WTC11 (cell line): ENCODE measurements at regions of chr5 and their contacts with region 1.

Region 1: GRCh38 chr5:141825791-141826560 is 52.2 kb downstream of the PCDH1 start:
- DNase-seq: no peak
- ATAC-seq: peak; percentile 69
- H3K4me3 Mint-ChIP-seq: no peak overlapping the region
- H3K27ac Mint-ChIP-seq: 0 out of 2 replicates have a peak overlapping the region, but pooled peaks have one; percentile 28
- H3K4me1 Mint-ChIP-seq: peaks cover 62% of the 10 kb centered on the region
- H3K27me3 Mint-ChIP-seq: no peaks in the 10 kb centered on the region
- CTCF ChIP-seq: peak; percentile 37

Region 2: DNA sequence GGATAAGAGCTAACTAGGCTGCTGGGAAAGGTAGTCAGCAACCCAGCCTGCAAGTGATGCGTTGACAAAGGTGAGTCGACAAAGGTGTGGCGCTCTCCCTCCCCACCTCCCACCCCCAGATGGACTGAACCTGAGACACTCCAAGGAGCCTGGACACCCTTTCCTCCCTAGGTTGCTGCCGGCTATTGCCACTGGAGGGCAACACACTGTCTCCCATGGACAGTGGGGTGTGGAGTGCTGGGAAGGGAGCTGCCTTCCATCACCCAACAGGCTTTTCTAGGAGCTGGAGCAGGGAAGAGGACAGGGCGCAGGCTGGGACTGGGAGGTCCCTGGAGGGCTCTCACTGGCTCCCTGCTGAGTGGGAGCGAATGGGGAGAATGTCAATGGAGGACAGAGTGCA is 68.6 kb before region 1 on chr5:
- CTCF ChIA-PET with region 1: interaction called, 43 read pairs
- POLR2A ChIA-PET with region 1: no interaction called
- DNase-seq: peak; percentile 70
- ATAC-seq: peak; percentile 62
- H3K4me3 Mint-ChIP-seq: peak overlapping the region; percentile 24; the same call in 1 of the 2 replicates
- H3K27ac Mint-ChIP-seq: no peak overlapping the region
- H3K4me1 Mint-ChIP-seq: peaks cover 49% of the 10 kb centered on the region
- H3K27me3 Mint-ChIP-seq: peaks cover 21% of the 10 kb centered on the region
- CTCF ChIP-seq: 0 out of 2 replicates have a peak, but pooled peaks have one; percentile 13

Region 3: DNA sequence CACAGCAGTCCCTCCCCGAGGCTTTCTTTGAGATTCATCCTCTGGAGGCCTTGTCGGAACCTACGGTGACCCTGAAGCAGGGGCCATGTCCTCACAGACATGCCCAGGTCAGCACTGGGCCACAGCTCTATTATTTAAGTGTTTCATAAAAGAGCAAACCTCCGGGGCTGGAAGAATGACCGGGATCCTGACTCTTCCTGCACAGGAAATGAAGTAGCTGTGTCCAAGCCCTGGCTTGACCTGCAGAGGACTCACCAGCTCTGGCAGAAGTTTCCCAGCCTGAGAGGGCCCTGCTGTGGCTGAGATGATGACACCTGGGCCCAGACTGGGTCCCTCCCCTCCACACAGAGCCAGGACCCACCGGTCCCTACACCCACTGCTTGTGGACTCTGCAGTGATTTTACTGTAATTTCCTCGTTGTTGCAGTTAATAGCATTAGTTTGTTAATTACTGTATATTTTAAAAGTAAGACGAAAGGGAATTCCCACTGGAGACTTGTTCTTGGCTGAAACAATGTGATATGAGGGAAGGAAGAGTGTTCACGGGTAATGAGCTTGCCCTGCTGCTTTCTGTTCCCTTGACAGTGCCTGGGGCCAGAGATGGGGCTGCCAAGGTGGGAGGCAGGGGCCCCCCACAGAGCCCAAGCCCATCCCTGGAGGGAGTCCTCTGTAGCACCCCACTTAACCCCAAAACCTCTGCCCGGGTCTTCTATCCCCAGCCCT is 19.9 kb before region 1 on chr5:
- CTCF ChIA-PET with region 1: interaction called, 171 read pairs
- POLR2A ChIA-PET with region 1: interaction called, 13 read pairs
- DNase-seq: no peak
- ATAC-seq: no peak
- H3K4me3 Mint-ChIP-seq: no peak overlapping the region
- H3K27ac Mint-ChIP-seq: peak overlapping the region; percentile 56; the same call in 1 of the 2 replicates
- H3K4me1 Mint-ChIP-seq: peaks cover 75% of the 10 kb centered on the region
- H3K27me3 Mint-ChIP-seq: peaks cover 3% of the 10 kb centered on the region; the same call in 1 of the 2 replicates
- CTCF ChIP-seq: no peak

Region 4: DNA sequence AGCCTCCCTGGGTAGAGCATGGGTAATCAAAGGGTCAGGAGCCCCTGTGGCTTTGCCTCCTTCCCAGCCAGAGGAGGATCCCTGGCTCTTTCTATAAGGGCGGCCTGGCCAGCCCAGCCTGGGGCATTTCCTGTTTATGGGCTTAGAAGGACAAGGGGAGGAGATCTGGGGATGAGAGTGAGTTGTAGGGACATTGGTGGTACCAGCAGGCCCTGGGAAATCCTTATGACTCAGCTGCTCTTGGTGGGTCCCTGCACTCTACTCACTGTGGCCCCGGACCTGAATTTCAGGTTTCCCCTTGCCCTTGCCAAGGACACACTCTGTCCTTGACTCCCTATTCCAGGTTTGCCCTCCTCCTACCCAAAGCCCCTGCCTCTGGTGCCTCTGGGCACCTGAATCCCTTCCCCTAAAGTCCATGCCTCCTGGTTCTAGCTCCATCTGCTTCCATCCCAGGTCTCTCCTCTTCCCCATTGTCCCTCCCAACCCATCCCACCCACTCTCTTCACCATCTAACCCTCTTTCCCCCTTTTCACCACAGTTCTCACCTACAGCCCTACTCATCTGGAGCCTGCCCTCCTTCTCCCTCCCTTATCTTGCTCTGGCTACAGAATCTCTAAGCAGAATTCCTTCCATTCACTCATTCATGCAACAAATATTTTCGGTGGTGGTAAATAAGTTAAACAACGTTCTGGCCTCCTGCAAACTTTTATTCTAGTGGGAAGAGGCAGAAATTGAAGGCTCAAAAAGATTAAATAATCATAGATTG is 17.4 kb after region 1 on chr5:
- CTCF ChIA-PET with region 1: interaction called, 78 read pairs
- POLR2A ChIA-PET with region 1: interaction called, 21 read pairs
- DNase-seq: no peak
- ATAC-seq: peak; percentile 5
- H3K4me3 Mint-ChIP-seq: peak overlapping the region; percentile 13; the same call in 1 of the 2 replicates
- H3K27ac Mint-ChIP-seq: peak overlapping the region; percentile 100
- H3K4me1 Mint-ChIP-seq: peaks cover 97% of the 10 kb centered on the region
- H3K27me3 Mint-ChIP-seq: no peaks in the 10 kb centered on the region
- CTCF ChIP-seq: no peak

Region 5: GRCh38 chr5:141951332-141951781 is 125.4 kb after region 1 on chr5:
- CTCF ChIA-PET with region 1: no interaction called
- POLR2A ChIA-PET with region 1: interaction called, 13 read pairs
- DNase-seq: peak; percentile 78
- ATAC-seq: peak; percentile 97
- H3K4me3 Mint-ChIP-seq: no peak overlapping the region
- H3K27ac Mint-ChIP-seq: no peak overlapping the region
- H3K4me1 Mint-ChIP-seq: peaks cover 12% of the 10 kb centered on the region
- H3K27me3 Mint-ChIP-seq: no peaks in the 10 kb centered on the region
- CTCF ChIP-seq: peak; percentile 80

Region 6: DNA sequence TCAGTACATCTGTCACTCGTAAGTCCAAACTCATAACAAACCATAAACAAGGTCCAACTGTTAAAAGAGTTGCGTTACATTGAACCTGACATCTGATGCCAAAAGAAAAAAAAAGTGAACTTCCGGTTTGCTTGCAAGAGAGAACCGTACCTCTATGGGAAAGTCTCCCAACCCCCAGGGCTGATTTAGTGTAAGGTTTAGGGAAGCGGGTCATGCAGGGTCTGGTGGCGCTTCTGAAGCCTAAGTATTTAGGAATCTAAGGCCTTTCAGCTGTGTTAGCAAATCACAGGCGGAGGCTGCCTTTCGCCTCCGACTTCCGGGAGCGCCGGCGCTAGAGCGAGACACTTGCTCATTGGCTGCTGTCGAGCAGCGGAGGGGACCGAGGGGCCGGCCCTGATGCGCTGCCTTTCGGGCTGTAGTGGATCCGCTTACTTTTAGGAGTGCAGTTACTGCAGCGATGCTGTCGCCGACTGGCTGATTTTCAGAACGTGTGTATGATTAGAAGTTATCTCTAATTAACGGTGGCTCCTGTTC is 198.9 kb after region 1 on chr5:
- CTCF ChIA-PET with region 1: no interaction called
- POLR2A ChIA-PET with region 1: no interaction called
- DNase-seq: peak; percentile 88
- ATAC-seq: peak; percentile 100
- H3K4me3 Mint-ChIP-seq: peak overlapping the region; percentile 79
- H3K27ac Mint-ChIP-seq: peak overlapping the region; percentile 97
- H3K4me1 Mint-ChIP-seq: peaks cover 15% of the 10 kb centered on the region
- H3K27me3 Mint-ChIP-seq: peaks cover 5% of the 10 kb centered on the region; the same call in 1 of the 2 replicates
- CTCF ChIP-seq: no peak